Ascending aorta (tissue), 2 donors: ENCODE measurements at regions of chr12 and their contacts with region 1.

Region 1: DNA sequence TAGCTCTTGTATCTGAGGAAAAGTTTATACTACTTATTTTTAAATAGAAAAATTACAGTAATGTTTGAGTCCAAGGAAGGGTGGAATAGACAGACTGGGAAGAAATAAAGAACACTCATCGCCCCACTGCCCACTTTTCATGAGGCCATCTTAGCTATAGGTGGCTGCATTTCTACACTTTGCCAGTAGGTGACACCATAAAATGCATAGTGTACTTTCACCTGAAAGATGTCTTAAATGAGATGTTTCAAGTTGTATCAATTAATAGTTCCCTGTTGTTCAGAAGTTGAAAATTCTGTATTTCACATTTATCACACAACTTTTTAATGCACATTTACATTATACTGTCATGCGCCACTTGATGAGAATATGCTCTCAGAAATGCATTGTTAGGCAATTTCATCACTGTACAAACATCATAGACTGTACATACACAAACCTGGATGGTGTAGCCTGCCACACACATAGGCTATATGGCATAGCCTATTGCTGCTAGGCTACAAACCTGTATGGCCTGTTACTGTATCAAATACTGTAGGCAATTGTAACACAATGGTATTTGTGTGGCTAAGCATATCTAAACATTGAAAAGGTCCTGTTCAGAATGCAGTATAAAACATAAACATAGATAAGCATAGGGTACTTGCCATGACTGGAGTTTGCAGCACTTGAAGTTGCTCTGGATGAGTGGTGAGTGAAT is 27.6 kb downstream of the PMCH start:
- DNase-seq: no peak
- H3K4me3 ChIP-seq: no peak overlapping the region
- H3K27ac ChIP-seq: no peak overlapping the region
- H3K4me1 ChIP-seq: peaks cover 0 to 3% of the 10 kb centered on the region in 2 donors
- H3K27me3 ChIP-seq: no peaks in the 10 kb centered on the region
- CTCF ChIP-seq: peak in 2 of 3 experiments; percentile 15 to 36

Region 2: DNA sequence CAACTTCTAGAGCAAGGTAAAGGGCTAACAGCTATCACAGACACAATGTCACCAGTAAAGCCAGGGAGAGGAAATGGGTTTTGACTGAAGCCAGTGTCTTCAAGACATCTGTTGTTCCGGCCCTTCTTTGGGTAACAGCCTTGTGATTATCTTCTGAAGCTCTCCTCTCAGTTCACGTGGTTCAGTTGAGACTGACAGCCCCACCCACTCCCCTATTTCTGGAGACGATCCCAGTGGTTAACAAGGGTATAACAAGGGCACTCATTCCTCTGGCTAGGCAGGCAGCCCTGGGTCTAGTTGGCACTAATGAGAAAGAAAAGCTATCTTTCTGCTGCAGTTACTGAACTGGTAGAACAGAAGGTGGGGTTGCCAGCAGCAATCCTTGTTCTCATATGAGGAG is 346.2 kb before region 1 on chr12:
- intact Hi-C with region 1: no loop called
- DNase-seq: no peak
- H3K4me3 ChIP-seq: no peak overlapping the region
- H3K27ac ChIP-seq: no peak overlapping the region
- H3K4me1 ChIP-seq: peaks cover 0 to 1% of the 10 kb centered on the region in 2 donors
- H3K27me3 ChIP-seq: no peaks in the 10 kb centered on the region
- CTCF ChIP-seq: no peak

Region 3: DNA sequence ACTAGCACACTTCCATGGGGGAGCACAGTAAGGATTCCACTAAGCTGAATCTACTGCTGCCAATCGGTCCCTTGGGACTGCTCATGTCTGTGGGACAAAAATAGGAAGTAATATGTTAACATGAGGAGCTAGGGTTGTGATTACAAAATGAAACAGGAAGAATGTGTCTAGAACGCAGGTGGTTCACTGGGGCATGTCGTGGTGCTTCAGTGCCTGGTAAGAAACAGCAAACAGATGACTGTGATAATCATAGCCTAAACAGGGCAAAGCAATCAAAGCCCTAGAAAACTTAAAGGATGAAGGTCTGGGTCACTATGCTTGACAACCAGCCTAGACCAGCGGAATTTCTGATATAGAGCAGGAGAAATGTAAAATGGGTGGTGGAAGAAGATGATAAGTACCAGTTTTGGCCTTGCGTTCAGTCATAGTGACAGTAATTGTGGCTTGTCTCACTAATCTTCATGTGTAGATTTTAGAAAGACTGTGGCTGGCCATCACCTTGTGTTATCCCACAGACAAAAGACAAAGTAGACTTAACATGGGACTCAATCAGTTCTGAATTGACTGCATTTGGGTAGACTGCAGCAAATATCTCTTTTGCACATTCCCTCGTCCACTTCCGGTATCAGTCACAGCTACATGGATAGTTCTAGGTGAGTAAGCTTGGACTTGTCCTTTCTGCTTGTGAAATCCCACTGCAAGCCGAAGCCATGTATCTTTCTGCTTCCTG is 159.6 kb before region 1 on chr12:
- intact Hi-C with region 1: no loop called
- DNase-seq: no peak
- H3K4me3 ChIP-seq: no peak overlapping the region
- H3K27ac ChIP-seq: no peak overlapping the region
- H3K4me1 ChIP-seq: no peaks in the 10 kb centered on the region
- H3K27me3 ChIP-seq: no peaks in the 10 kb centered on the region
- CTCF ChIP-seq: no peak

Region 4: GRCh38 chr12:102204025-102204424 is 34.0 kb after region 1 on chr12:
- intact Hi-C with region 1: no loop called
- DNase-seq: no peak
- H3K4me3 ChIP-seq: no peak overlapping the region
- H3K27ac ChIP-seq: no peak overlapping the region
- H3K4me1 ChIP-seq: no peaks in the 10 kb centered on the region
- H3K27me3 ChIP-seq: no peaks in the 10 kb centered on the region
- CTCF ChIP-seq: no peak

Region 5: GRCh38 chr12:102484428-102484958 is 314.4 kb after region 1 on chr12:
- intact Hi-C with region 1: loop called (anchors 10 kb)
- DNase-seq: peak in 1 of 2 donors; percentile 78
- H3K4me3 ChIP-seq: peak overlapping the region; percentile 18 to 52
- H3K27ac ChIP-seq: peak overlapping the region in 1 of 2 donors; percentile 31
- H3K4me1 ChIP-seq: peaks cover 0 to 8% of the 10 kb centered on the region in 2 donors
- H3K27me3 ChIP-seq: no peaks in the 10 kb centered on the region
- CTCF ChIP-seq: peak; percentile 43 to 90 (median 87)